ENCODE measurements at regions of chr13 and their contacts with region 1.

Region 1: DNA sequence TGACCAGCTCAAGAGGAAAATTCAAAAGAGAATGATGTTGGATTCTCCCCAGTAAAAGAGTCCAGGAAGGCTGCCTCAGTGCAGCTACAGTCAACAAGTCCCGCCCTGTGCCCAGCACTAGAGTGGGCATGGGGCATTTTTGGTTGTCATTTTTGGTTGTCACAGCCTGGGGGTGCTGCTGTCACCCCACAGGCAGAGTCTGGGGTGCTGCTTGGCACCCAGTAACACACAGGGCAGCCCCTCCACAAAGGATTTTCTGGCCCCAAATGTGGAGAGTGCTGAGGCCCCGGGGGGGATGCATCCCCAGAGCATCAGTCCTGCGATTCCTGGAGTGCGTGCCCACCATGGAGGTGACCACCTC is 28.2 kb upstream of the TMEM255B start:
- DNase-seq: no peak
- H3K4me3 ChIP-seq: no peak overlapping the region
- H3K27ac ChIP-seq: no peak overlapping the region
- H3K4me1 ChIP-seq: peaks cover 0 to 4% (median 0%) of the 10 kb centered on the region in 4 experiments; a peak in 1 of 7 replicates
- H3K27me3 ChIP-seq: peaks cover 0 to 5% (median under 1%) of the 10 kb centered on the region in 4 experiments; a peak in 3 of 7 replicates
- CTCF ChIP-seq: peak in 1 of 3 experiments; percentile 20; a peak in 1 of 4 replicates
- EP300 ChIP-seq: no peak
- POLR2A ChIP-seq: no peak
- RAD21 ChIP-seq: peak; percentile 37 to 52; a peak in 3 of 4 replicates

Region 2: GRCh38 chr13:113742000-113742441 is 11.2 kb after region 1 on chr13:
- CTCF ChIA-PET with region 1: interaction called, 13 read pairs
- POLR2A ChIA-PET with region 1: no interaction called
- DNase-seq: no peak
- H3K4me3 ChIP-seq: no peak overlapping the region
- H3K27ac ChIP-seq: no peak overlapping the region
- H3K4me1 ChIP-seq: peaks cover 0 to 8% (median 3%) of the 10 kb centered on the region in 4 experiments; a peak in 3 of 7 replicates
- H3K27me3 ChIP-seq: no peaks in the 10 kb centered on the region
- CTCF ChIP-seq: peak in 2 of 3 experiments; percentile 48 to 72; a peak in 3 of 4 replicates
- EP300 ChIP-seq: no peak
- POLR2A ChIP-seq: no peak
- RAD21 ChIP-seq: peak; percentile 24 to 42; a peak in 1 of 4 replicates